Mammary epithelial cell (primary cell): ENCODE measurements at regions of chr1 and their contacts with region 1.

Region 1: GRCh38 chr1:6624710-6625583 is at the start of gene THAP3:
- DNase-seq: peak; percentile 81
- H3K4me3 ChIP-seq: peak within 1 kb of the TSS; percentile 75 to 81 (median 78)
- H3K27ac ChIP-seq: peak within 1 kb of the TSS; percentile 44
- H3K4me1 ChIP-seq: peaks cover 7% of the 10 kb centered on the region
- H3K27me3 ChIP-seq: no peaks in the 10 kb centered on the region
- CTCF ChIP-seq: no peak
- total RNA-seq, gene THAP3: 7.2 to 11.4 TPM

Region 2: DNA sequence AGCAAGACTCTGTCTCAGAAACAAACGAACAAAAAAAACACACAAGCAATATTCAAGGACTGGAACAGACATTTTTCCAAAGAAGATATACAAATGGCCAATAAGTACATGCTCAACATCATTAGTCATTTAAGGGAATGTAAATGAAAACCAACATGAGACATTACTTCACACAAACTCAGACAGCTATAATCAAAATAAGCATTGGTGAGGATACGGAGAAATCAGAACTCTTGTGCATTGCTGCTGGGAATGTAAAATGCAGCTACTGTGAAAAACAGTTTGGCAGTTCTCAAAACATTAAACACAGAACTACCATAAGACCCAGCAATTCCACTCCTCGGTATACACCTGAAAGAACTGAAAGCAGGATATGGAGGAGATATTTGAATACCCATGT is 86.0 kb before region 1 on chr1:
- CTCF ChIA-PET with region 1: no interaction called
- dilution Hi-C with region 1: loop called (anchors 5 kb)
- in situ Hi-C with region 1: no loop called
- intact Hi-C with region 1: no loop called
- DNase-seq: no peak
- H3K4me3 ChIP-seq: no peak overlapping the region
- H3K27ac ChIP-seq: no peak overlapping the region
- H3K4me1 ChIP-seq: no peaks in the 10 kb centered on the region
- H3K27me3 ChIP-seq: no peaks in the 10 kb centered on the region
- CTCF ChIP-seq: no peak

Region 3: DNA sequence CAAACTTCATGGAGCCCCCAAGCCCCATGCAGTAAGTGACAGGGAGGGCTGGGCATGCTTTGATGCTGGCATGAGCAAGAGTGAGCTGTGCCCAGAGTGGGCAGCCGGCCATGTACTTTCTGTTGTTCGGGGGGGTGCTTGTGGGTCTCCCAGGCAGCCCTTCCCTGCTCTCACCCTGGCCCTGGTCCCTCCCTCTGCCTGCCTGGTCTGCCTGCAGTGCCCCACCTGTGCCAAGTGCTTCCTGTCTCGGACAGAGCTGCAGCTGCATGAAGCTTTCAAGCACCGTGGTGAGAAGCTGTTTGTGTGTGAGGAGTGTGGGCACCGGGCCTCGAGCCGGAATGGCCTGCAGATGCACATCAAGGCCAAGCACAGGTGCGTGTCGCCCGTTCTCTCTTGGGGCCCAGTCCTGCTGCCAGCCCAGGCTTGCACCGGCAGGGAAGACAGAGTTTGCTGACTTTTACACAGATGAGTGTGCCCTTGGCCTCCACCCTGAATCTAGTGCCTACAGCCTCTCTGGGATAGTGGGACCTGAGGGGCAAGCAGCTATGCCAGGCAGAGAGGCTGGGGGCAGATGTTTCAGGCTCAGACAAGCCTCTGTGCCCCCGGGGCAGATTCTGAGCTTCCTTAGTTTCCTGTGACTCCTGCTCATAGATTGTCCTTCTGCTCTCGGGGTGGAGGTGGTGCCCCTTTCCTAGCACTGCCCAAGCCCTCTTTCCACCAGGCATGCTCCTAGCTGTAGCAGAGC is 37.5 kb before region 1 on chr1:
- CTCF ChIA-PET with region 1: no interaction called
- dilution Hi-C with region 1: loop called (anchors 5 kb)
- in situ Hi-C with region 1: no loop called
- intact Hi-C with region 1: loop called (anchors 5 kb)
- DNase-seq: peak; percentile 63
- H3K4me3 ChIP-seq: no peak overlapping the region
- H3K27ac ChIP-seq: peak overlapping the region; percentile 13
- H3K4me1 ChIP-seq: peaks cover 34% of the 10 kb centered on the region
- H3K27me3 ChIP-seq: no peaks in the 10 kb centered on the region
- CTCF ChIP-seq: no peak

Region 4: DNA sequence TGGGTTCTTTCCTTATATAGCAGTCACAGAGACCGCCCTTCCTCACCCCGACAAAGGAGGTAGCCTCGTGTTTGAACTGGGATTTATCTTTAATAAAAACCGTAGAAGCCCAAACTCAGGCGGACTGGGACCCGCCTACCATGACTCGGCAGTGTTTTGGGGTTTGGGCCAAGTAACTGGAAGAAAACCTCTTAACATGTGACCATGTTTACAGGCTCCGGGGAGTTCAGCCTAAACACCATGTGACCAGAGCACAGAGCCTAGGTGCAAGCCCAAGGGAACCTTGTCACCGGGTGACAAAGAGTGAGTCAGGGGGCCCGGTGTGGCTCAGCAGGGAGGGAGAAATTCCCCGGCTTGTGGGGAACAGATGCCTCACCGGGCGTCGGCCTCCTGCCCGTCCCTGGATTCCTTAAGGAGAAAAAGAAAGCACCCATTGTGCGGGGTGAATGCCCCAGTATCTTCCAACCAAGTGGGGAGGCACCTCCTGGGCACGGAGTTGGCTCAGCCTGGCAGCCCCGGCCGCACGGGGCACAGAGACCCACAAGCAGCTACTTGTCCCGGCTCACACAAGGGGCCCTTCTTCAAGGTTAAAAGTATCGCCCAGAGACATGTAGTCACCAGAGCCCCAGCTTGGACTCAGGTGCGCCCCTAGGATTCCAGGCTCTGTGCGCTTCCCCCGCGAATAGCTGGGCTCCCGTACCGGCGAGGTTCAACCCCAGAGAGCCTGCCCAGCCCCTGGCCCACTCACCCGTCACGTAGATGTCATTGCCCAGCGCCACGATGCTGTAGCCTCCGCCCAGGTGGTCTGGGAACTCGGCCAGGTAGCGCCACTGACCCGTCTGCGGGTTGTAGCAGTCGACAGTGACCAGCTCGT is 23.7 kb before region 1 on chr1:
- CTCF ChIA-PET with region 1: no interaction called
- dilution Hi-C with region 1: no loop called
- in situ Hi-C with region 1: no loop called
- intact Hi-C with region 1: loop called (anchors 1 kb)
- DNase-seq: peak; percentile 99
- H3K4me3 ChIP-seq: peak overlapping the region; percentile 58 to 98 (median 95)
- H3K27ac ChIP-seq: peak overlapping the region; percentile 97
- H3K4me1 ChIP-seq: peaks cover 42% of the 10 kb centered on the region
- H3K27me3 ChIP-seq: no peaks in the 10 kb centered on the region
- CTCF ChIP-seq: peak in 1 of 2 donors; percentile 6

Region 5: DNA sequence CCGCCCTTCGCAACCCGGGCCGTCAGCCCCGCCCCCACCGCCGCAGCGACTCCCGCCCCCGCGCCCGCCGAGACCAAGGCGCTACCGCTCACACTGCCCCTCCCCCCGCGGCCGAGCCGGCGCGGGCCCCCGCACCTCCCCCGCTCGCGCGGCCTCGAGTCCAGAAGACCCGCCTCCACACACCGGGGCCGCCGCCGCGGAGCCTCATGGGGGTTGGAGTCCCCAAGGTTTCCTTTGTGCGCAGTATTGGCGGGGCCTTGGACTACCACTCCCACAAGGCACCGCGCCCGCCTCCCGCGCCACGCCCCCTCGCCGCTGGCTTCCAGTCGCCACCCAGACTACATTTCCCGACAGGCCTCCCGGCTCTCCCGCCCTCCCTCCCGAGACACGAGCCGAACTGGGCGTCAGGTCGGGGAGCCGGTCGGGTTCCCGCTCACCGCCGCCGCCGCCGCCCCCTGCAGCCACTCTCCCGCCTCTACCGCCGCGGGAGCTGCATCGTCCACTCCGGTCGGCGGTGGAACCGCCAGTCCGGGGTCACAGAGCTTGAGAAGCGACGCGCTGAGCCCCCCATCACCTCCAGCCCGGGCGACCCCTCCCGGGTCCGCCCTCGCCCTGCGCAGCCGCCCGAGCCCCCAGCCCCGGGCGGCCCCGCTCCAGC is 11.5 kb before region 1 on chr1 and contains the start of gene PHF13:
- CTCF ChIA-PET with region 1: no interaction called
- dilution Hi-C with region 1: no loop called
- in situ Hi-C with region 1: no loop called
- intact Hi-C with region 1: loop called (anchors 1 kb)
- DNase-seq: peak; percentile 99
- H3K4me3 ChIP-seq: peak within 1 kb of the TSS; percentile 77 to 89 (median 88)
- H3K27ac ChIP-seq: peak within 1 kb of the TSS; percentile 84
- H3K4me1 ChIP-seq: peaks cover 23% of the 10 kb centered on the region
- H3K27me3 ChIP-seq: no peaks in the 10 kb centered on the region
- CTCF ChIP-seq: no peak
- total RNA-seq, gene PHF13: 11.8 to 16.3 TPM